ENCODE measurements at regions of chr5 and their contacts with region 1.

Region 1: DNA sequence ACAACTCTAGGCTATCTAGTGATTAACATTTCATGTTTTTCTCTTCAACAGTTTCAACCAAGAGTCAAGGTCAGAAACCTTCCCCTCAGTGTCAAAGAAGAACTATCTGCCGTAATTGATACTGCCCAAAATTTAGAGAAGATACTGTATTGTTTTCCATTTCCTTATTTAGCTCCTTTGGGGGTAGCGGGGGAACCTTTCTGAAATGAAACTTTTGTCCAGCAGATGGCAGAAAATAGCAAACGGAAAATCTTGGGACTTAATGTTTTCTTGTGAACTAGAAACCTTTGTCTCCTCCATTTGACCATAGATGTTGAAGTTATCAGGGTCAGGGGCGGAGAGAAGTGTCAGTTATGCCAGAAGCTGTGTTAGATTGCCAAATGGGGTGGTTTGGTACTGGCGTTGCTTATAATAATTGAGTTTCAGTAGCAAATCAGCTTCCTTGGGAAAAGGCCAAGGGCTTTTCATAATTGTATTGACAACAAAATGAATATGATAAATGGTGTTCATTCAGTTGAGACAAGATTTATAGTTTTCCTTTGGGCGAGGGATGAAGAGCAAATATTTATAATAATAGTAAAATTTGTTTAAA is 101.7 kb upstream of the TLX3 start:
- DNase-seq: peak; percentile 16
- H3K4me3 ChIP-seq: no peak overlapping the region
- H3K27ac ChIP-seq: no peak overlapping the region
- H3K4me1 ChIP-seq: no peaks in the 10 kb centered on the region
- H3K27me3 ChIP-seq: no peaks in the 10 kb centered on the region
- CTCF ChIP-seq: peak; percentile 54 to 58

Region 2: GRCh38 chr5:170747851-170748250 is 459.5 kb before region 1 on chr5:
- CTCF ChIA-PET with region 1: no interaction called
- dilution Hi-C with region 1: no loop called
- in situ Hi-C with region 1: no loop called
- intact Hi-C with region 1: loop called (anchors 10 kb)
- DNase-seq: no peak
- H3K4me3 ChIP-seq: no peak overlapping the region
- H3K27ac ChIP-seq: no peak overlapping the region
- H3K4me1 ChIP-seq: peaks cover 41% of the 10 kb centered on the region
- H3K27me3 ChIP-seq: peaks cover 1% of the 10 kb centered on the region
- CTCF ChIP-seq: peak; percentile 16 to 21

Region 3: DNA sequence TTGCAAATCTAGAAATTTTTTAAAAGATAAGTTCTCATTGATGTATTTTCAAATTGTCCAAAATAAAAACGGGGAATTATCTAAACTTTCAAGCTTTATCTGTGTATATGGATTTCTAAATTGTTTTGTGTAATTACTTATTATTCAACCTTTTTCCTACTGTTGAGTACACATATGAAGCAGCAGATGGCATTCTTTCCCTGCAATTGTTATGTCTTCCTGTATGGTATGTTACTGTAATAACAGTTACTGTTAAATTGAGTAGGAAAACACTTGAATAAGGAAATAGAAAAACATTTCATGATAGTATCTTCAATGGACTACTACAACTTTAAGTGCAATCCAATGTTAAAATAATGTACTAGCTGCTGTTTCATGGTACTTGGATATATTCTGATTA is 220.8 kb before region 1 on chr5:
- CTCF ChIA-PET with region 1: no interaction called
- dilution Hi-C with region 1: no loop called
- in situ Hi-C with region 1: no loop called
- intact Hi-C with region 1: loop called (anchors 5 kb)
- DNase-seq: peak; percentile 3
- H3K4me3 ChIP-seq: no peak overlapping the region
- H3K27ac ChIP-seq: no peak overlapping the region
- H3K4me1 ChIP-seq: no peaks in the 10 kb centered on the region
- H3K27me3 ChIP-seq: no peaks in the 10 kb centered on the region
- CTCF ChIP-seq: peak; percentile 16 to 37

Region 4: DNA sequence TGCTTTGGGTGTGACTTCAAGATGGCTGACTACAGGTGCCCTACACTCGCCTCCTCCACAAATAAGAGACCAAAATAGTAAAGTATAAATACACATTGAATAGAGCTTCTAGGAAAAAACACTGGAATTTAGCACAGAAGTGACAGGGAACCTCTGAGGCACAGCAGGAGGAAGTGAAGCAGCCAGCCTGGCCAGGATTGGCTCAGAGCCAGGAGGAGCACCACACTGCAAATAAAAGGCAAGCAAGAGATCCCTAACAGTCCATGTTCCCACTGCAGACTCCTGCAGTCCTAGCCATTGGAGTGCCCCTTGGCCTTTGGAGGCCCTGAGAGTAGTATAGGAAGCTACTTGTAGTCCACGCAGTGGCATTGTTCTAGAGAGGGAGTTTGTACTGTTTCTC is 85.0 kb before region 1 on chr5:
- CTCF ChIA-PET with region 1: no interaction called
- dilution Hi-C with region 1: no loop called
- in situ Hi-C with region 1: no loop called
- intact Hi-C with region 1: no loop called
- DNase-seq: no peak
- H3K4me3 ChIP-seq: no peak overlapping the region
- H3K27ac ChIP-seq: no peak overlapping the region
- H3K4me1 ChIP-seq: no peaks in the 10 kb centered on the region
- H3K27me3 ChIP-seq: no peaks in the 10 kb centered on the region
- CTCF ChIP-seq: no peak

Region 5: DNA sequence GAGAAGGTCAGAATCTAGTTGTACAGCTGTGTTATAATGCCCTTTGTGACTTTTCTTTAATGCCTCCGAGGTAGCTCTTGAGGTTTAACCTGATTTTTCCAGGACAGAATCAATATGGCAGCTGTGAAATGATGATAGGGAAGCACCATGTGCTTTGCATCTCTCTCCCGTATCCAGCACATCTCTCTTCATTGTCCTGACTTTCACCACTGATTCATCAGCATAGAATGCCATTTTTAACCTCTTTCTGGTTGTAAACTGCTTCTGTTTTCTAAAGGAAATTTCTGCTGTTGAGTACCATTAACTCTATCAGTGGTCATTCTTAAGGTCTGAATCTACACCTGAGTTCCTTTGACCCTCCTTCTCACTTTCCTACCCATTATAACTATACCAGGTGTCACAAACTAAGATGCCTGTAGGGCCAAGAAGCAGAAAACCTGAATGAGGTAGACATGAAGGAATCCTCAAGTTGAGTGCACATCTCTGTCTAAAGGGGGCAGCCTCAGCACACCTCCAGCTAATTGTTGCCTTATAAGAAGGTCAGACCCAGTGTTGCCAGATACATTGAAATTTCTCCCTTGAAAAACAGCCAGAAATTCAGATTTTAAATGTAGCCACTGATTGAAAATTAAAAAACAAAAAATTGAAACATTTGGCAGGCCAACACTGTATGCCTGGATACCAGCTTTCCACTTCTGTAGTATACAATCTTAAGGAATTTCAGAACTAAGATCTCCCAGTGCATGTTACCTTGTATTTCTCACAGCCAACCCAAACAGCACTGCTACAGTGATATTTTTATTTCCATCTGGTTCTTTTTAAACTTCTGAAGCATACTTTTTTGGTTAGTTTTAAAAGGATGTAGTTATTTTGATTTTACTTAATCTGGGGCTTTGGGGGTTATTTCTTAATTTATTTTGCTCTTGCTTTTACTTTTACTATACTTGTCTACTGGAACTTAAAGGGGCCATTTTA is 65.9 kb after region 1 on chr5:
- CTCF ChIA-PET with region 1: no interaction called
- dilution Hi-C with region 1: no loop called
- in situ Hi-C with region 1: no loop called
- intact Hi-C with region 1: loop called (anchors 1 kb)
- DNase-seq: peak; percentile 21
- H3K4me3 ChIP-seq: no peak overlapping the region
- H3K27ac ChIP-seq: no peak overlapping the region
- H3K4me1 ChIP-seq: no peaks in the 10 kb centered on the region
- H3K27me3 ChIP-seq: no peaks in the 10 kb centered on the region
- CTCF ChIP-seq: peak; percentile 40 to 47

Region 6: GRCh38 chr5:171310212-171310818 is 103.0 kb after region 1 on chr5:
- CTCF ChIA-PET with region 1: no interaction called
- dilution Hi-C with region 1: no loop called
- in situ Hi-C with region 1: no loop called
- intact Hi-C with region 1: no loop called
- DNase-seq: no peak
- H3K4me3 ChIP-seq: no peak overlapping the region
- H3K27ac ChIP-seq: no peak overlapping the region
- H3K4me1 ChIP-seq: peaks cover 4% of the 10 kb centered on the region
- H3K27me3 ChIP-seq: peaks cover 83% of the 10 kb centered on the region
- CTCF ChIP-seq: peak; percentile 41 to 57

Region 7: GRCh38 chr5:171323806-171324633 is 116.7 kb after region 1 on chr5:
- CTCF ChIA-PET with region 1: no interaction called
- dilution Hi-C with region 1: no loop called
- in situ Hi-C with region 1: no loop called
- intact Hi-C with region 1: no loop called
- DNase-seq: no peak
- H3K4me3 ChIP-seq: no peak overlapping the region
- H3K27ac ChIP-seq: no peak overlapping the region
- H3K4me1 ChIP-seq: no peaks in the 10 kb centered on the region
- H3K27me3 ChIP-seq: peaks cover 17% of the 10 kb centered on the region
- CTCF ChIP-seq: no peak